B cell (primary cell): ENCODE measurements at regions of chr10 and their contacts with region 1.

Region 1: DNA sequence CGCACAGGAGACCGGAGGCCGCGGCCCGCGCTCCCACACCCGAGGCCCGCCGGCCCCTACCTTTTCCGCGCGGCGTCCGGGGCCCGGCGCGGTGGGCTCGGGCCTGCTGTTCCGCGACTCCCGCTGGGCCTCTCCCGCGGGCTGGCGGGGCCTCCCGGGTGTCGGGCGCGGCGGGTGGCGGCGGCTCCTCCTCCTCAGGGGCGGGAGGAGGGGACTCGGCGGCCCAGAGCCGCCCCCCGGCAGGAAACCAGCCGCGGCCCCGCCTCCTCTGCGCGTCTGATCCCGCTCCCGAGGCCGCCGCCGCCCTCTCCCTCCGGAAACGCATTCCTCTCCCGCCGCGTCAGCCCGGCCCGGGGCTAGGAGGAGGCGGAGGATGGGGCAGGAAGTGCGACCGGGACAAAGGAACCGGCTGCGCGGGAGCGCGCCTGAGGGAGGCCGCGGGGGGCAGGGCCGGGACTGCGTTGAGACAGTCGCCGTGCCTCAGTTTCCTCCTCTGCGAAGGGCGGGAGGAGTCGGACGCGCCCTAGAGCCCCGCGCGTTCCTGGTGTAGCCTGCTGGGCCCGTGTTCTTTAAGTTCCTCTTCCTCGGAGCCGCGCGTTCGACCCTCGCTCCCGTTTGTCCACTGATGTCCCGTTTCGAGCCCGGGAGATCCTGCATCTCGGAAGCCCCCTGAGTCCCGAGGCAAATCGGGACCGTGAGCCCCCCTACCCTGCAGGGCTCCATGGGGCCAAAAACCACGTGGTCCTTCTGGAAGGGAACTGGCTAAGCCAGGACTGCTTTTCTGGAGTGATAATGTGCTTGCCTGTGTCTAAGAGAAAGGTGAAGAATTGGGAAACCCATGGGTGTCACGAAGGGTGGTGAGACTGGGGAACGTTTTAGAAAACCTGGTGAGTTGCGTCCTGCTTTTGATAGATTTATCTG is at the start of gene ITGB1:
- DNase-seq: peak; percentile 85
- ATAC-seq: peak; percentile 89
- H3K4me3 ChIP-seq: peak within 1 kb of the TSS; percentile 64 to 95 (median 90)
- H3K4me3 Mint-ChIP-seq: peak within 1 kb of the TSS; percentile 94
- H3K27ac ChIP-seq: peak within 1 kb of the TSS; percentile 74 to 84
- H3K27ac Mint-ChIP-seq: peak within 1 kb of the TSS; percentile 93
- H3K4me1 ChIP-seq: peaks cover 27 to 35% of the 10 kb centered on the region in 2 donors
- H3K4me1 Mint-ChIP-seq: peaks cover 63% of the 10 kb centered on the region
- H3K27me3 ChIP-seq: no peaks in the 10 kb centered on the region
- H3K27me3 Mint-ChIP-seq: no peaks in the 10 kb centered on the region
- CTCF ChIP-seq: no peak
- total RNA-seq, gene ITGB1: 118 and 128 TPM in 2 replicates

Region 2: GRCh38 chr10:32055813-32056600 is 902.3 kb before region 1 on chr10 and contains the start of gene KIF5B:
- CTCF ChIA-PET with region 1: no interaction called
- POLR2A ChIA-PET with region 1: no interaction called
- intact Hi-C with region 1: loop called (anchors 10 kb)
- DNase-seq: peak; percentile 93
- ATAC-seq: peak; percentile 85
- H3K4me3 ChIP-seq: peak within 1 kb of the TSS; percentile 64 to 97 (median 85)
- H3K4me3 Mint-ChIP-seq: peak within 1 kb of the TSS; percentile 98
- H3K27ac ChIP-seq: peak within 1 kb of the TSS; percentile 80 to 90
- H3K27ac Mint-ChIP-seq: peak within 1 kb of the TSS; percentile 97
- H3K4me1 ChIP-seq: peaks cover 31 to 47% of the 10 kb centered on the region in 2 donors
- H3K4me1 Mint-ChIP-seq: peaks cover 53% of the 10 kb centered on the region
- H3K27me3 ChIP-seq: no peaks in the 10 kb centered on the region
- H3K27me3 Mint-ChIP-seq: no peaks in the 10 kb centered on the region
- CTCF ChIP-seq: no peak
- total RNA-seq, gene KIF5B: 40.1 and 44.1 TPM in 2 replicates

Region 3: DNA sequence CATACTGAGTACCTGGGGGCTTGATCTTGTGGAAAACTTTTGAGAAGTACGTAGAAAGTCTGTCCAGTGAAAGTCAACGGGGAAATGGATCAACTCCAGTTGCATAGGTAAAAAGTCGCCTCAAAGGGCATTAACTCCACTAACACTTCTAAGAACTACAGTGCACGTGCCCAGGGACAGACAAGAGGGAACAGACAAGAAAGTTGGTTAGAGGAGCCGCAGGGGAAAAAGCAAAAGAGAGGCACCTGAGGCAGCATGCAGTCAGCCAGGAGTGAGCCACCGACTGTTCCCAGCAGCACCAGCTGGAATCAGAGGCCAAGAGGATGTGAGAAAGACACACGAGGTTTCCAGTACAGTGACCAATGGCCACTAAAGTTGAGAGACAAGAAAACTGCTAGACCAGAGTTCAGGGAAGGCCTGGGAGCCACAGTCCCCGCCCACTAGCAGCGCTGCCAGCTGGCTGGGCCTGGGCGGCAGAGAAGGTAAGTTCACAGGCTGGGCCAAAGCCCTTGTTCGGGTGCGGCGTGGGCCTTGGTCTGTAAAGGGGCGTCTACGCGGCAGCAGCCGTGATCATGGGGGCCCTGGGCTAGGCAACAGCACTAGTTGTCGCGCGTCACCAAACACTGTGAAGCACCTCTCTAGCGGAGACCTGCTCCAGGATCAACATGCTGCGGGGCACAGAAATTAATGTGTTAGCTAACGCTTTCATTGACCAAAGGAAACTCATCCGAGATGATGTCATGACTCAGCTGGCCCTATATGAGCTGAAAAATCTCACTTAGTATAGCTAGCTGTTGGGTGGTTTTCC is 14.3 kb before region 1 on chr10:
- CTCF ChIA-PET with region 1: interaction called, 7 read pairs
- POLR2A ChIA-PET with region 1: no interaction called
- intact Hi-C with region 1: loop called (anchors 2 kb)
- DNase-seq: no peak
- ATAC-seq: no peak
- H3K4me3 ChIP-seq: no peak overlapping the region
- H3K4me3 Mint-ChIP-seq: peak overlapping the region; percentile 46
- H3K27ac ChIP-seq: peak overlapping the region in 1 of 2 donors; percentile 35
- H3K27ac Mint-ChIP-seq: peak overlapping the region; percentile 85
- H3K4me1 ChIP-seq: peaks cover 31 to 42% of the 10 kb centered on the region in 2 donors
- H3K4me1 Mint-ChIP-seq: peaks cover 68% of the 10 kb centered on the region
- H3K27me3 ChIP-seq: no peaks in the 10 kb centered on the region
- H3K27me3 Mint-ChIP-seq: no peaks in the 10 kb centered on the region
- CTCF ChIP-seq: no peak

Region 4: GRCh38 chr10:32980558-32981468 is 22.5 kb after region 1 on chr10:
- CTCF ChIA-PET with region 1: interaction called, 3 read pairs
- POLR2A ChIA-PET with region 1: no interaction called
- intact Hi-C with region 1: loop called (anchors 1 kb)
- DNase-seq: peak; percentile 76
- ATAC-seq: peak; percentile 97
- H3K4me3 ChIP-seq: peak overlapping the region; percentile 56 to 74 (median 67)
- H3K4me3 Mint-ChIP-seq: peak overlapping the region; percentile 95
- H3K27ac ChIP-seq: peak overlapping the region; percentile 37 to 55
- H3K27ac Mint-ChIP-seq: peak overlapping the region; percentile 89
- H3K4me1 ChIP-seq: peaks cover 3 to 12% of the 10 kb centered on the region in 2 donors
- H3K4me1 Mint-ChIP-seq: peaks cover 13% of the 10 kb centered on the region
- H3K27me3 ChIP-seq: peaks cover 0 to 2% (median 0%) of the 10 kb centered on the region in 4 experiments
- H3K27me3 Mint-ChIP-seq: no peaks in the 10 kb centered on the region
- CTCF ChIP-seq: no peak

Region 5: DNA sequence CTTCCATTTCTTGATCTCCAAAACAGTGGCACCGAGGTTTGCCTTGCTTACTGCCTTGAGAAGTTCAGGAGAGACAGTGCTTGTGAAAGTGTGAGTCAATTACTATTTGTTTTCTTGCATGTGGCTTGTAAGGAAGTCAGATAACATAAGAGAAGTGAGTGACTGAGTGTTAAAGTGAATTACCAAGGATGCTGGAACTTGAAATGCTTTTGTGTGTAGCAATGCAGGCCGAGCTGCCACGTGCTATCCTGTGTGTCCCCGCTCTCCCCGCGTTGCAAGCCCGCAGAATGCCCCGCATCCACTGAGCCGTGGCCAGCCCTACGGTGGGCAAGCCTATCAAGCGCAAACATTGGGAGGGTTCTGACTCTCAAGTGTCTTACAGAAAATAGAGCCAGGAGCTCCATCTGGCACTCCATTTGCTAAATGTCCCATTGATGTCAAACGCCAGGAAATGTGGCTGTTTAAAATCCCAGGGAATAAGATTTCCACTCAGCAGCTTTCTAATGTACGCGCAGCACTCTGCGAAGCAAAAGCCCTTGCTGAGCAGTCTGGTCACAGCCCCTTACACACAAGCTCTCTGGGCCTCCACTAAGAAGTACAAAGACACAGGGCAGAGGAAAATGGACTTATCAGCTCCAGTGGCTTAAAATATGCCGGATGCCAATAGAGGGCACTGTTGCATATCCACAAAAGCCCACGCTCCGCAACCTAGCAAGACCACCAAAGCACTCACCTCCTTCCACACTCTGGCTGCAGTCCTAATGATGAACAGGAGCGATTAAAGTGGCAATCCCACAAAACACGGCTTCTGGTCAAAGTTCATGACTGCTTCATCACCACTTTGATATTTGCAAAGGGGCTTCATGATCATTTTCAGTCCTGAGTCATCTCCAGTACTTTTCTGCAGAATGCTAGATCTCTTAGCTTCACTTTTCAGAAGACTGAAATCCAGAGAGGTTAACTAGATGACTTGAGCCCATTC is 157.7 kb after region 1 on chr10:
- CTCF ChIA-PET with region 1: interaction called, 5 read pairs
- POLR2A ChIA-PET with region 1: no interaction called
- intact Hi-C with region 1: loop called (anchors 5 kb)
- DNase-seq: no peak
- ATAC-seq: no peak
- H3K4me3 ChIP-seq: no peak overlapping the region
- H3K4me3 Mint-ChIP-seq: no peak overlapping the region
- H3K27ac ChIP-seq: peak overlapping the region; percentile 39 to 54
- H3K27ac Mint-ChIP-seq: peak overlapping the region; percentile 92
- H3K4me1 ChIP-seq: peaks cover 42 to 76% of the 10 kb centered on the region in 2 donors
- H3K4me1 Mint-ChIP-seq: peaks cover 78% of the 10 kb centered on the region
- H3K27me3 ChIP-seq: no peaks in the 10 kb centered on the region
- H3K27me3 Mint-ChIP-seq: no peaks in the 10 kb centered on the region
- CTCF ChIP-seq: no peak